ENCODE measurements at regions of chr17 and their contacts with region 1.

Region 1: DNA sequence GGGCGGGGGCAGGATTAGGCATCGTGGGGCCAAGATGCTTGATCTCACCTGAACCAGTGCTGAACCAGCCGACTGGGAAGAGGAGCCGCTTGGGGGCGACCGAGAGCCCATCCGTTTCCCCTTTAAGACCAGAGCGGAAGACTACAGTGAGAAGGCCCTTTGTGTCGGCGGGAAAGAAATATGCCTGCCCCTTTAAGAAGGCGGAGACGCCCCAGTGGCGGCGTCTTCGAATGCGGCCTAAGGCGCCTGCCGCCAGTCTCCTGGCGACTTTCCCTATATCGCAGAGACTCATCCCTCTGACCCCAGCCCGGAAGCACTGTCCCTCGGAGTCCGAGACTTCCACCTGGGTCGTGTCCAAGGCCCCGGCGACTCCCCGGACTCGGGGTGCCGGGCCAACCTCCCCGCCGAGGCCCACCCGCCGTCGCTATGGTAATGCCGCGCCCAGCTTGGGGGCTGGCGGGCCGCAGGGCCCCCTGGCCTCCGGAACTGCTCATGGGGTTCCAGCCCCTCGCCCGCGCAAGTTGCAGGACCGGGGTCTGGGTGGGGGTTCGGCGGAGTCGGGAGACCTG is at the start of gene HROB:
- DNase-seq: peak; percentile 96 to 98 (median 97)
- H3K4me3 ChIP-seq: peak within 1 kb of the TSS; percentile 62 to 91 (median 83)
- H3K27ac ChIP-seq: peak within 1 kb of the TSS; percentile 92 to 93
- H3K4me1 ChIP-seq: peaks cover 6 to 22% (median 16%) of the 10 kb centered on the region in 4 experiments
- H3K27me3 ChIP-seq: peaks cover 0 to 3% (median 0%) of the 10 kb centered on the region in 5 experiments

Region 2: DNA sequence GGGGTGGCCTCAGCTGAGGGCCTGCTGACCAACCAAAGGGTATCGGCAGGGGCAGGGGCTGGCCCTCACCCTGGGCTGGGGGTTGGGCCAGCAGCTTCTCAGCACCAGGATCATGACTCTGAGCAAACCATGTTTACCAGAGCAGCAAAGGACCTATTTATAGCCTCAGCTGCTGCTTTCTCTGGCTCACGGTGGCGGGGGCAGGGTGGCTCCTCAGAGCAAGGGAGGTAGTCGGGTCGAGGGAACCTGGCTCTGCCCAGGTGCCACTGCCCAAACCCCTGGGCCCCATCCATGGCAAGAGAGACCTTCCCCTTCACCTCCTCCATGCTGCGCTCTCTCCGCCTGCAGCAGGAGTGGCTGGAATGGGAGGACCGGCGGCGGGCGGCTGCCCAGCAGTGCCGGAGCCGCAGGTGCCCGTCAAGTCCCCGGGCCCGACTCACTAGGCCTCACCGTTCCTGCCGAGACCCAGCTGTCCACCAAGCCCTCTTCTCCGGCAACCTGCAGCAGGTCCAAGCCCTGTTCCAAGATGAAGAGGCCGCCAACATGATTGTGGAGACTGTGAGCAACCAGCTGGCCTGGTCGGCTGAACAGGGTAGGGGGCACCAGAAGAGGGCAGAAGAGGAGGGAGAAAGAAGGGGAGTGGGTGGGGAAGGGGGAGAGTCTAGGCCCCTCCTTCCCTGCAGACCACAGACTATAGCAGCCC is 28.8 kb after region 1 on chr17 and contains the start of gene ASB16:
- CTCF ChIA-PET with region 1: interaction called, 41 read pairs
- POLR2A ChIA-PET with region 1: no interaction called
- DNase-seq: no peak
- H3K4me3 ChIP-seq: no peak within 1 kb of the TSS
- H3K27ac ChIP-seq: no peak within 1 kb of the TSS
- H3K4me1 ChIP-seq: peaks cover 0 to 19% (median 3%) of the 10 kb centered on the region in 4 experiments
- H3K27me3 ChIP-seq: no peaks in the 10 kb centered on the region

Region 3: DNA sequence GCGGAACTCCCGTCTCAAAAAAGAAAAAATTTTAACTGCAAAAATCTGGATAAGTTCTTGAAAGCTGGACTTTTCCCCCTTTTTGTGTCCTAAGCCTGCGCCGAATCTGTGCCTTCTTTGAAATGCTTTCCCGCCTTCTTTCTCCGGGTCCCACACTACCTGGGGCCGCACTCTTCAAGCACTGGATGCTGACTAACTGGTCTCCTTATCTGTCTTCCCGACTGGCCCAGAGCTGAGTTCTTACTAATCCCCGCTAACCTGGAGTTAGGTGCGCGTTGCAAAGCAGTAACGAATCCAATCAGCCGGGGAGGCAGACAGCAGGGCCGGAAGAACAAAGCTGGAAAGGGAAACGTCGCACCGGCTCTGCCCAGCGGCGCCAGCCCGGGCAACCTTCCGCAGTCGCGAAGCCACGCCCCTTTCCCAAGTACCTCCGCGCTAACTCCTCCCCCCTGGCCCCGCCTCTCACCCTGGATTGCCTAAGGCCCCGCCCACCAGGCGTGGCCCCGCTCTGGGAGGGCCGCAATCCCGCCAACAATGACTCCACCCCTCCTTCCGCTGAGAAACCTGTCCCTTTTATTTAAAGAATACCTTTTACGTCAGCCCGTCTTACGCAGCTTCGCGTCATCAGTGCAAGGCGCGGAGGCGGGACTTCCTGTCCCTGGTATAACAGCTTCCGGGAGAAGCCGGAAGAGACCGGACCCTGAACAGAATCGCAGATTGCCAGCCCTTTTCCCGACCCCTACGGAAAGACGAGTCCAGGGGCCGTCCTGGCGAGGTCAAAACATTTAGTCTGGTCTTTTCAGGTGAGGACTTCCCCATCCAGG is 44.7 kb after region 1 on chr17 and contains the start of gene TMUB2:
- CTCF ChIA-PET with region 1: no interaction called
- POLR2A ChIA-PET with region 1: no interaction called
- DNase-seq: peak; percentile 99 to 100 (median 99)
- H3K4me3 ChIP-seq: peak within 1 kb of the TSS; percentile 72 to 100 (median 97)
- H3K27ac ChIP-seq: peak within 1 kb of the TSS; percentile 98 to 99
- H3K4me1 ChIP-seq: peaks cover 5 to 27% (median 18%) of the 10 kb centered on the region in 4 experiments
- H3K27me3 ChIP-seq: no peaks in the 10 kb centered on the region

Measured in common myeloid progenitor, CD34-positive (primary cell).